Ascending aorta (tissue), 2 donors: ENCODE measurements at regions of chr7 and their contacts with region 1.

Region 1: GRCh38 chr7:99990460-99990852 is 14.6 kb upstream of the AZGP1 start:
- DNase-seq: no peak
- H3K4me3 ChIP-seq: peak overlapping the region in 1 of 2 donors; percentile 53
- H3K27ac ChIP-seq: no peak overlapping the region
- H3K4me1 ChIP-seq: no peaks in the 10 kb centered on the region
- H3K27me3 ChIP-seq: no peaks in the 10 kb centered on the region
- CTCF ChIP-seq: no peak

Region 2: DNA sequence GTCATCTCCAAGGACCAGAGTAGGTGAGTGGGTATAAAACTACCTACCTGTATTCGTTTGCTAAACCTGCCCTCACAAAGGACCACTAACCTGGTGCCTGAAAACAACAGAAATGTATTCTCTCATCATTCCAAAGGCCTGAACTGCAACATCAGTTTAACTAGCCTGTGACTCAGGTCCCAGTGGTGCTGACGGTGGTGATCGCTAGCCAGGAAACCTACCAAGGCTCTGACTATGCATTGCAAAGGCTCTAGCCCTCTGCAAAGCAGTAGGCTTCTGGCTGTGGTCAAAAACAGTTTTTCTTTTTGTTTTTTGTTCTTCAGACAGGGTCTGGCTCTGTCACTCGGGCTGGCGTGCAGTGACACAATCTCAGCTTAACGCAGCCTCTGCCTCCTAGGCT is 1265.9 kb before region 1 on chr7:
- intact Hi-C with region 1: no loop called
- DNase-seq: no peak
- H3K4me3 ChIP-seq: no peak overlapping the region
- H3K27ac ChIP-seq: no peak overlapping the region
- H3K4me1 ChIP-seq: no peaks in the 10 kb centered on the region
- H3K27me3 ChIP-seq: no peaks in the 10 kb centered on the region
- CTCF ChIP-seq: no peak

Region 3: GRCh38 chr7:99910976-99911375 is 79.5 kb before region 1 on chr7:
- intact Hi-C with region 1: loop called (anchors 2 kb)
- DNase-seq: no peak
- H3K4me3 ChIP-seq: no peak overlapping the region
- H3K27ac ChIP-seq: no peak overlapping the region
- H3K4me1 ChIP-seq: no peaks in the 10 kb centered on the region
- H3K27me3 ChIP-seq: no peaks in the 10 kb centered on the region
- CTCF ChIP-seq: no peak

Region 4: GRCh38 chr7:99975782-99976521 is 14.5 kb before region 1 on chr7 and contains the start of gene AZGP1:
- intact Hi-C with region 1: loop called (anchors 1 kb)
- DNase-seq: no peak
- H3K4me3 ChIP-seq: no peak within 1 kb of the TSS
- H3K27ac ChIP-seq: no peak within 1 kb of the TSS
- H3K4me1 ChIP-seq: no peaks in the 10 kb centered on the region
- H3K27me3 ChIP-seq: no peaks in the 10 kb centered on the region
- CTCF ChIP-seq: no peak
- total RNA-seq, gene AZGP1: not detected

Region 5: DNA sequence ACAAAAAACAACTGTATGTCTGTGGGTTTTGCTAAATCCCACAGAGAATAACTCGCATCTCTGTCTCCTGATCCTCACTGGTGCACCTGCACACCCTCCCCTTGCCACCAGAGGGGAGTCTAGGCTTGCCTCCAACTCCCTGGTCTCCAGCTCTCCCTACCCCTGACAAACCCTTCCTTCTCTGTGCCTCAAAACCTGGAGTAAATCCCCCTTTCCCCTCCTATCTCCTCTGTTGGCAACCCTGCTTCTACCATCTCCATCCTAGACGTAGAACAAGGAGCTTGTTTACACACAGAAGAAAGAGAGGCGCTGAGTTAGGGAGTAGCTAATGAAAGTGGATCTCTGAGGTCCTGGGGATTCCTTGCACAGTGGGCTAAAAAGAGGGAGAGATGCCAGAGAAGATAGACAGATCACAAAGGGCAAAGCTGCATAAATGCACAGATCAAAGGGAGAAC is 142.3 kb after region 1 on chr7:
- intact Hi-C with region 1: loop called (anchors 5 kb)
- DNase-seq: no peak
- H3K4me3 ChIP-seq: no peak overlapping the region
- H3K27ac ChIP-seq: no peak overlapping the region
- H3K4me1 ChIP-seq: peaks cover 0 to 8% of the 10 kb centered on the region in 2 donors
- H3K27me3 ChIP-seq: no peaks in the 10 kb centered on the region
- CTCF ChIP-seq: peak; percentile 62 to 70 (median 69)

Region 6: GRCh38 chr7:101205901-101206664 is 1215.6 kb after region 1 on chr7:
- intact Hi-C with region 1: no loop called
- DNase-seq: no peak
- H3K4me3 ChIP-seq: no peak overlapping the region
- H3K27ac ChIP-seq: no peak overlapping the region
- H3K4me1 ChIP-seq: peaks cover 2 to 5% of the 10 kb centered on the region in 2 donors
- H3K27me3 ChIP-seq: peaks cover 8% of the 10 kb centered on the region
- CTCF ChIP-seq: no peak